Activated T-helper 2 cell treated with anti-CD3 and anti-CD28 coated beads, Interferon-gamma antibody, Interleukin-2, Interleukin-4, amounts not matched to agents 10 μg/mL and 5 μg/mL and 100 μg/mL, durations not matched to agents 14 hours and 24 hours and 36 hours (primary cell): ENCODE measurements at regions of chr4 and their contacts with region 1.

Region 1: GRCh38 chr4:6673660-6674499 is 19.8 kb upstream of the S100P start:
- DNase-seq: peak; percentile 94
- H3K4me3 Mint-ChIP-seq: peak overlapping the region; percentile 92
- H3K27ac Mint-ChIP-seq: peak overlapping the region; percentile 95
- H3K4me1 Mint-ChIP-seq: peaks cover 41% of the 10 kb centered on the region
- H3K27me3 Mint-ChIP-seq: no peaks in the 10 kb centered on the region

Region 2: DNA sequence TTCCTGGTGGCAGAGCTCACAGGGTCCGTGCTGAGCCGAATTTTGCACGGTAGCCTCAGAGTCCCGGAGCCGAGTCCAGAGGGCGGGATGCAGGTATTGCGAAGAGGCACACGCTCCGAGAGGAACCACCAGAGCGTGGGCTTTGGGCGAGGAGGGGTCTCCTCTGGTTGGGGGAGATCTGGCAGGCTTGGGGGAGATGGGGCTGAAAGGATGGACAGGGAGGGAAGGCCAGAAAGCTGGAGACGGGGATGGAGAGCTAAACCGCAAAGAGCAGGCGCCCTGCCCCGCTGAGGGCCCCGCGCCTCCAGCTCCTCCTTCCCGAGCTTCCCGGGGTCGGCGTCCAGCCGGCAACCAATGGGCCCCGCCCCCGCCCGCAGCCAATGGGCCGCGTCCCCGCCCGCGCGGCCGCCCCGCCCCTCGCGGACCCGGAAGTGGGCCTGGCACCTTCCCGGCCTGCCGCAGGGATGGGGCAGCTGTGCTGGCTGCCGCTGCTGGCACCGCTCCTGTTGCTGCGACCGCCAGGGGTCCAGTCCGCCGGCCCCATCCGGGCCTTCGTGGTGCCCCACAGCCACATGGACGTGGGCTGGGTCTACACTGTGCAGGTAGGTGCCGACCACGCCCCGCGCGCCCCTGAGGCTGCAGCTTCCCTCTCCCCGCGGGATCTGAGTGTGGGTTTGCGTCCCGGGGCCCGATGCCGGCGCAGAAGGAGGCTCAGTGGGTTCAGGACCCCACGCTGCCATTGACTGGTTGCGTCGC is 99.0 kb before region 1 on chr4 and contains the start of gene MAN2B2:
- intact Hi-C with region 1: loop called (anchors 10 kb)
- DNase-seq: peak; percentile 78
- H3K4me3 Mint-ChIP-seq: peak within 1 kb of the TSS; percentile 84
- H3K27ac Mint-ChIP-seq: peak within 1 kb of the TSS; percentile 79
- H3K4me1 Mint-ChIP-seq: peaks cover 6% of the 10 kb centered on the region
- H3K27me3 Mint-ChIP-seq: peaks cover 6% of the 10 kb centered on the region
- total RNA-seq, gene MAN2B2: 14.9 and 16.3 TPM in 2 replicates

Region 3: GRCh38 chr4:6688879-6689505 is 15.1 kb after region 1 on chr4:
- intact Hi-C with region 1: loop called (anchors 1 kb)
- DNase-seq: peak; percentile 74
- H3K4me3 Mint-ChIP-seq: peak overlapping the region; percentile 82
- H3K27ac Mint-ChIP-seq: peak overlapping the region; percentile 94
- H3K4me1 Mint-ChIP-seq: peaks cover 69% of the 10 kb centered on the region
- H3K27me3 Mint-ChIP-seq: no peaks in the 10 kb centered on the region

Region 4: DNA sequence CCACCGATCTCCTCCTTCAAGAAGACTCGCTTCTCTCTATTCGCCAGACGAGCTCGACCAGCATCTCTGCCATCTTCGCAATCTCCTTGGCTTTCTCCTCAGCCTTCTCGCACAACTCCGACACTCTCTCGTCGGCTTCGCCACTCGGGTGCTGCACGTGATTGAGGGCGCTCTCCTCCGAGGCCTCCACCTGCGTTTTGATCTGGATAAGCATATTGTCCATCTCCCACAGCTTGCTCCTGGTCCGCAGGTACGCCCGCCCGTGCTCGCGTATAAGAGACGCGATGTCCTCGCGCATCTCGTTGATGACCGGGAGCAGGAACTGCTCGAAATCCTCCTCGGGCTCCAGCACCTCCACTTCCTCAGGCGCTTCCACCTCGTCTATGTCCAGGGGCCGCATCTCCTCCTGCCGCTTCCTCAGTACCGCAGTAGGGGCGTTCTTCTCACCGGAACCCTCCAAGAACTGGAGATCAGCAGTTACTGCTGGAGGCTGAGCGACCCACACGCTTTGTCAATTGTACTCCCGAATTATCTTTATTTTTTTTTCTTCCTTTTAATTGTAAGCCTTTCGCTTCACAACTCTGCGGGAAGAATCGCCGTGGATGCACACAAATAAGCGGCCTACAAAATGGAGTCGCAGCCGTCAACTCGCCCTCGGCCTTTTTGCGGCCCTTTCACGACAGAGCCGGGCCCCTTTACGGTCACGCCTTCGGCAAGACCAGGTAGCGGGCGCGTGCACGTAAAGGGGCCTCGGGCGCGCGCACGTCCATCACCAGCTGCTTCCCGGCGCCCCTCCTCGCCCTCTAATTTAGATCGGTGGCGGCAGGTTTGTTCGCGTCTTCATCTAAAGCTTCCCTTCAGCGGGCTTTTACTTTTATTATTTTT is 35.6 kb after region 1 on chr4 and contains the start of gene MRFAP1L1:
- intact Hi-C with region 1: loop called (anchors 1 kb)
- DNase-seq: peak; percentile 94
- H3K4me3 Mint-ChIP-seq: peak within 1 kb of the TSS; percentile 94
- H3K27ac Mint-ChIP-seq: peak within 1 kb of the TSS; percentile 95
- H3K4me1 Mint-ChIP-seq: peaks cover 51% of the 10 kb centered on the region
- H3K27me3 Mint-ChIP-seq: peaks cover 2% of the 10 kb centered on the region
- total RNA-seq, gene MRFAP1L1: 46.6 and 49.6 TPM in 2 replicates

Region 5: DNA sequence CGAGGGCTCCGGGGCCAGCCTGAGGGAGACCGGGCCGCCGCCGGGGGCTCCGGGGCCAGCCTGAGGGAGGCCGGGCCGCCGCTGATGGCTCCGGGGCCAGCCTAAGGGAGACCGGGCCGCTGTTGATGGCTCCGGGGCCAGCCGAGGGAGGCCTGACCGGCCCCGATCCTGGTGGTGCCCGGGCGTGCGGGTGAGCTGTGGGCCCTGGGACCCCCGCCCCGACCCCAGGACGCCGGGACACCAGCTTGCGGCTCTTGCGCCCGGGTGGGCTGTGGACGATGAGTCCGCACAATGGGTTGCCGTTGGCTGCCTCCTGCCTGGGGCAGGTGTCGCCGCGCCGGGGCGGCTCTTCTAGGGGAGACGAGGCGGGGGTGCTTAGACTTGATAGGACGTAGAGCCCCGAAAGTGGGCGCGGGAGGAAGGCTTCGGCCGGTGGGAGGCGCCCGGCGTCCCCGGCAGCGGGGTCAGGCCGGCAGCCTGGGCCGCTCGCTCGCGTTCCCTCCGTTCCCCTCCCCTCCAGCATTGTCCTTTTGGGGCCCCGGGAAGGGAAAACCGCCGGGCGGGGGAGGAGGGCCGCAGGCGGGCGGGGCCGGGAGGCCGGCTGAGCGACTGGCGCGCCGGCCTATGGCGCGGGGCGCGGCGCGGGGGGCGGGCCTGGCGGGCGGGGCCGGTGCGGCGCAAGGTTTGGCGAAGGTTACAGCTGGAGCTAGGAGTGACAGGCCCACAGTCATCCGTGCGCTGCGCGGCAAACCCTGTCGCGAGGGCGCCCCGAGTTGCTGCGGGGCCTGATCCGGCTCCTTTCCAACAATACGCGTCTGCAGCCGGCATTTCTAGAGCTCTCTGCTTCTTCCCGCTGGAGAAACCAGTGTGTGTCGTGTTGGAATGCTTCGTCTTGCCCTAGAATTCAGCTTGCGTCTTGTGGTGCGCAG is 109.4 kb after region 1 on chr4:
- intact Hi-C with region 1: loop called (anchors 2 kb)
- DNase-seq: peak; percentile 86
- H3K4me3 Mint-ChIP-seq: peak overlapping the region; percentile 79
- H3K27ac Mint-ChIP-seq: peak overlapping the region; percentile 75
- H3K4me1 Mint-ChIP-seq: peaks cover 55% of the 10 kb centered on the region
- H3K27me3 Mint-ChIP-seq: no peaks in the 10 kb centered on the region

Region 6: GRCh38 chr4:6855692-6856297 is 181.9 kb after region 1 on chr4:
- intact Hi-C with region 1: no loop called
- DNase-seq: no peak
- H3K4me3 Mint-ChIP-seq: no peak overlapping the region
- H3K27ac Mint-ChIP-seq: peak overlapping the region; percentile 53
- H3K4me1 Mint-ChIP-seq: peaks cover 12% of the 10 kb centered on the region
- H3K27me3 Mint-ChIP-seq: no peaks in the 10 kb centered on the region

Region 7: DNA sequence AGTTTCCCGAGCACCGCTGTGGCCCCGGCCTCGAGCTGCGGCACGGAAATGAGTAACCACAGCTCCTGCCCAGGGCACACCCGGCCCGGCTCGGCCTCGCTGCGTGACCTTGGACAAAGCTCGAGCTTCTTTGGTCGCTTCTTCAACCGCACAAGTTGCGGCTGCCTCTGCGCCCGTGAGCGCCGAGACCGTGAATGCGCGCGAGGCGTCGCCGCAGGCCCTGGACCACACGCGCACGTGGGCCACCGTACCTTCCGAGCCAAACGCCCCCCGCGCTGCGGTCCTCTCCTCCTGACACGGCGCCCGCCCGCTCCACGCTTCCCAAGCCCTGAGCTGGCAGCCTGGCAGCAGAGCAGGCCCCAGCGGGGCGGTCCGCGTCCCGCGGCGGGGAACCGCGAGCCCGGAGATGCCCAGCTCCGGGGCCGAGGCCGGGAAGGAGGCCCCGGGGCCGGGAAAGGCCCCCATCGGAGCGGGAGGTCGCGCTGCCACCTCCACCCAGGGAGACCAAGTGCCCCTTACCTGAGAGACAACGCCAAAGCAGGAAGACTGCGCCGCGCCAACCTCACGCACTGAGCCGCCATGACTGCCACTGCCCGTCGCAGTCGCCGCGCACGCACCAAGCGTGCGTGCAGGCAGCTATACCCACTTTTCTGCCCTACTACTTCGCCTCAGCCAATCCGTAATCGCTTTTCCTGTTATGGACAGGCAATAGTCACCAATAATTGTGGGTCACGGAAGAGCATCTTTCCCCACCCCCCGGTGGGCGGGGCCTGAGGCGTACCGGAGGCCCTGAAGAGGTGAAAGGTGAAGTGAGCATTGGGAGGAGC is 393.8 kb after region 1 on chr4 and contains the start of gene GRPEL1:
- intact Hi-C with region 1: loop called (anchors 1 kb)
- DNase-seq: peak; percentile 99
- H3K4me3 Mint-ChIP-seq: peak within 1 kb of the TSS; percentile 89
- H3K27ac Mint-ChIP-seq: peak within 1 kb of the TSS; percentile 93
- H3K4me1 Mint-ChIP-seq: peaks cover 34% of the 10 kb centered on the region
- H3K27me3 Mint-ChIP-seq: peaks cover 12% of the 10 kb centered on the region
- total RNA-seq, gene GRPEL1: 84.4 and 84.6 TPM in 2 replicates